Dendritic cell treated with granulocyte-macrophage colony-stimulating factor and Interleukin-4, amounts not matched to agents 40 ng/mL and 50 ng/mL, for 4 days (primary cell): ENCODE measurements at regions of chr5 and their contacts with region 1.

Region 1: DNA sequence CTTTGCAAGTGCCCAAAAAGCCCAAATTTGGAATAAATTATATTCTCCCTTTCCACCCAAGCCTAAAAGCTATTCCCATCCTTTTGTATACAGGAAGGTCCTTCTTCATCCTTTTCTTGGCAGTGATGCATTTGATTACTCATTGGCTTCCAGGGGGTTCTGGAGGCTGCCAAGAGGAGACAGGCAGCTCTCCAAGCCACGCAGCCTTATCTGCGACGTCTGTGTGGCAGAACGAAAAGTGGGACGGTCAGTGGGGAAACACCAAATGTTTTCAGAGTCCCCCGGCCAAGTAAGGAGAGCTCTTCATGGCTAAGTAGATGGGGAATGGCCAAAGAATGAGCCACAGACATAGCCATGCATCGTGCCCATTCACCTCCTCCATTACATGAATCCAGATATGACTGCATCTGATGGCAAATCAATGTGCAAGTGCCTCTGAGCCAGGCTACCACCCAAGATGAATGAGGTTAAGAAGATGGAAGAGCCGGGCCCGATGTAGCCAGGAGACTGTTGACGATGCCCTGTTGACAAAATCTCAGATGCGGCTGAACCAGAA is 12.1 kb downstream of the ADAM19 start:
- H3K4me3 Mint-ChIP-seq: no peak overlapping the region
- H3K27ac Mint-ChIP-seq: no peak overlapping the region
- H3K4me1 Mint-ChIP-seq: peaks cover 76% of the 10 kb centered on the region
- H3K27me3 Mint-ChIP-seq: peaks cover 40% of the 10 kb centered on the region

Region 2: DNA sequence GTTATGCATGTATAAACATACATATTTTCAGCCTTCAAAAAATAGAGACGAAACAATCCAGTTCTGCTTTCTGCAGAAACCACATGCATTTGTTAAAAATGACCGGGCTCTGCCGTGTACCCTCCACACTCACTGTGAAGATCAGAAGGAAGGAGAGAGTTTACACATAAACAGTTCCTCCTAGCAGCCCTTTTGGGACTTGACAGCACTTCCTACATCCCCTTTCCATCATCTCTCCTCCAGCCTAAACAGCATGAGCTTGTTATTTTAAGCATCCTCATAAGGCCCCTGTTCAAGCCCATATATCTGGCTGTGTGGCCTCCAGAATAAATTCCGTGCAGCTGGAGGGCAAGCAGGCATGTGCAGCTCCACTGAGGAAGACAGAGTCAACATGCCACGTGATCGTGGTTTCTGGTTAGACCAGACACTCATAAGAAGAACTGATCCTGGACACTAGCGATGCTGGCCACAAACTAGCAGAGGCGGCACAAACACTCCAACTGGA is 61.3 kb before region 1 on chr5:
- intact Hi-C with region 1: loop called (anchors 10 kb)
- H3K4me3 Mint-ChIP-seq: no peak overlapping the region
- H3K27ac Mint-ChIP-seq: peak overlapping the region; percentile 81
- H3K4me1 Mint-ChIP-seq: peaks cover 63% of the 10 kb centered on the region
- H3K27me3 Mint-ChIP-seq: peaks cover 1% of the 10 kb centered on the region